ENCODE measurements at regions of chr5 and their contacts with region 1.

Region 1: DNA sequence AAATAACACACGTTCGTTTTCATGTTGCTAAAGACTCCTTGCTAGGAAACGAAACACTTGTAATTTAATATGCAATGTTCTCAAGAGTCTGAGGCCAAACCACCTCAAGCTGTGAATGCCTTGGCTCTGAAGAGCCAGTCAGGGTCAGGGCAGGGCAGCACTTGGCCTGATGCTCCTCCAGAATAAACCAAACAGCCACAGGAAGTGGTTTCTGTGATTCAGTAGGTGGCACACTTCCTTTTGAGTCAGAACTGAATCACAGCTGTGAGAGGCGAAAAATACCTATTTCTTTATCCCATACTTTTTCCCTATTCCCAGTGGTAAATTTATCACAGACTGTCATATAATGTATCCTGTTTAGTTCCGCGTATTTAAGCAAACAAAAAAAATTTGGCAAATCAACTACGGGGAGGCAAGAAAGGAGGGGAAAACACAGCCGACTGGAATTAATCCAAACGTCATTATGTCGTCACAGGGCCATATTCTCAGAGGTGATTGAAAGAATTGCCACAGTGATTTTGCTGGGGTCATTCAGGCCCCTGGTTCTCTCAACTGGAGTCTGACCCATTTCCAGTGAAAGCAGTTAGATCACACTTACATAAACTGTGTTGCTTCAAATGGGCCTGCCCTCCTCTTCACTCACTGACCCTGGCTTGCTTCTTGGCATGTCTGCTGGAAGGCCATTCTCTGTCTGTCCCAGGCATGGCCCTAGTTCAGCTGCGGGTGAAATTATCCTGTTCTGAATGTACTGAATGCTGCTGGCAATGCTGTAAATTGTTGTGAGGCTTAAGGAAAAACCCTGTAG is 71.2 kb downstream of the ARRDC3 start:
- DNase-seq: peak; percentile 75
- H3K4me3 Mint-ChIP-seq: peak overlapping the region; percentile 48
- H3K27ac Mint-ChIP-seq: peak overlapping the region; percentile 68
- H3K4me1 Mint-ChIP-seq: peaks cover 52% of the 10 kb centered on the region
- H3K27me3 Mint-ChIP-seq: no peaks in the 10 kb centered on the region

Region 2: GRCh38 chr5:90474235-90475109 is 837.4 kb before region 1 on chr5 and contains the starts of genes MBLAC2 and POLR3G:
- CTCF ChIA-PET with region 1: no interaction called
- intact Hi-C with region 1: loop called (anchors 10 kb)
- DNase-seq: peak; percentile 96
- H3K4me3 Mint-ChIP-seq: peak within 1 kb of the TSS; percentile 92
- H3K27ac Mint-ChIP-seq: peak within 1 kb of the TSS; percentile 85
- H3K4me1 Mint-ChIP-seq: peaks cover 33% of the 10 kb centered on the region
- H3K27me3 Mint-ChIP-seq: no peaks in the 10 kb centered on the region
- total RNA-seq, gene MBLAC2: 2.4 to 2.8 TPM
- total RNA-seq, gene POLR3G: 10.1 to 13.6 TPM

Region 3: DNA sequence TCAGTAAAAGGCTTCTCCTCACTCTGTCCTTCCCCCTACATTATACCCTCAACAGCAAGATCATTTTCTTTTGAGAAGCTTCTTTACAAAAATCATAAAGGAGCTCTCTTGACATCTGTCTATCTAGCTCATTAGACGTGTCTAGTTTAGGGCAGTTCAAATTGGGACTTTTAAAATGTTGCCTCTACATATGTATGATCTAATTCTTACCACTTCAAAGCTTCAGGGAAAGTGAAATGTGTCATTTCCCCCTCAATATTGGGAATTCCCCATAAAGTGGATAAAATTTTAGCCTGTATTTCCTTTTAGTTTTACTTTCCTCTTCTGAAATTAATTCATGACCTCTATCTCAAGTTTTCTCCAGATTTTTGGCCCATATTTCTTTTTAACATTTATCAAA is 252.5 kb before region 1 on chr5:
- CTCF ChIA-PET with region 1: no interaction called
- intact Hi-C with region 1: loop called (anchors 1 kb)
- DNase-seq: no peak
- H3K4me3 Mint-ChIP-seq: no peak overlapping the region
- H3K27ac Mint-ChIP-seq: no peak overlapping the region
- H3K4me1 Mint-ChIP-seq: peaks cover 28% of the 10 kb centered on the region
- H3K27me3 Mint-ChIP-seq: peaks cover 40% of the 10 kb centered on the region

Region 4: DNA sequence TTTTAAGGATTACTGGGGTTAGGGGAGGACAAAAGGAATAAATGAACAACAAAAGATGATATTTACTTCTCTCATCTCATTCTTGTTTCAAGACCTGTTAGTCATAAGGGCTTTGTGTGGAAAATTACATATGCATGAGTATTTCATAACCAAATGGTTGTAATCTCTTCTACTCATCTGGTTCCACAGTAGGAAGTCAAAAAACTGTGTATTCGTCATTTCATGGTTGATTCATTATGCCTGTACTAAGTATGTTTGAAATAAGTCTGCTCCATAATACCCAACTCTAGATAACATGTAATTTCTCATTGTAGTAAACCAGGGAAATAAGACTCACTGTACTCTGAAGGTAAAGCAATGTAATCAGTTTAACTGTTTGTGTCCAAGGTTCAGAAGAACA is 141.6 kb before region 1 on chr5:
- CTCF ChIA-PET with region 1: no interaction called
- intact Hi-C with region 1: loop called (anchors 1 kb)
- DNase-seq: no peak
- H3K4me3 Mint-ChIP-seq: no peak overlapping the region
- H3K27ac Mint-ChIP-seq: peak overlapping the region; percentile 16
- H3K4me1 Mint-ChIP-seq: peaks cover 18% of the 10 kb centered on the region
- H3K27me3 Mint-ChIP-seq: peaks cover 3% of the 10 kb centered on the region

Region 5: DNA sequence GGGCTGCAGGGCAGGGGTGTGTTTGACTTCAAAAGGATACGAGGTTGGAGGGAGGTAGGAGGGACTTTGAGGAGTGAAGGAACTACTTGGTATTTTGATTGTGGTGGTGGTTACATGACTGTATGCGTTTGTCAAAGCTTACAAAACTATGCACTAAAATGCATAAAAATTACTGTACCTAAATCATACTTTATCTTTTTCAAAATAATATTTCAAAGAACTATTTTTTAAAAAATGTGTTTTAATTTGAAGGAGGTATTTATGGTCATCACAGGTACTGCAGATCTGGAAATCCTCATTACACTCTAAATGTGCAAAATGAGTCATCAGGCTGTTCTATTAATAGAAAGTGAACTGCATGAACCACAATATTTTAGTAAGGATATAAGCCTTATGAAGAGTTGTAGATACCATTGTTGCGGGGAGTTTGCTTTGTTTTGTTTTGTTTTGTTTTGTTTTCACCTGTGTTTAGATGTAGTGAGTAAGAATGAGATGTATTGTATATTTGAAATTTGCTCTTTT is 45.7 kb before region 1 on chr5:
- CTCF ChIA-PET with region 1: interaction called, 3 read pairs
- intact Hi-C with region 1: loop called (anchors 1 kb)
- DNase-seq: no peak
- H3K4me3 Mint-ChIP-seq: no peak overlapping the region
- H3K27ac Mint-ChIP-seq: no peak overlapping the region
- H3K4me1 Mint-ChIP-seq: peaks cover 22% of the 10 kb centered on the region
- H3K27me3 Mint-ChIP-seq: no peaks in the 10 kb centered on the region

Region 6: GRCh38 chr5:91332267-91333045 is 20.6 kb after region 1 on chr5:
- CTCF ChIA-PET with region 1: no interaction called
- intact Hi-C with region 1: loop called (anchors 1 kb)
- DNase-seq: peak; percentile 20
- H3K4me3 Mint-ChIP-seq: no peak overlapping the region
- H3K27ac Mint-ChIP-seq: no peak overlapping the region
- H3K4me1 Mint-ChIP-seq: peaks cover 15% of the 10 kb centered on the region
- H3K27me3 Mint-ChIP-seq: no peaks in the 10 kb centered on the region

Region 7: GRCh38 chr5:91424638-91425436 is 112.9 kb after region 1 on chr5:
- CTCF ChIA-PET with region 1: no interaction called
- intact Hi-C with region 1: no loop called
- DNase-seq: no peak
- H3K4me3 Mint-ChIP-seq: no peak overlapping the region
- H3K27ac Mint-ChIP-seq: no peak overlapping the region
- H3K4me1 Mint-ChIP-seq: peaks cover 6% of the 10 kb centered on the region
- H3K27me3 Mint-ChIP-seq: no peaks in the 10 kb centered on the region

Measured in activated naive CD4-positive, alpha-beta T cell treated with anti-CD3 and anti-CD28 coated beads for 36 hours (primary cell).